ENCODE measurements at regions of chr11 and their contacts with region 1.

Region 1: GRCh38 chr11:72598906-72599305 is 75.3 kb downstream of the PDE2A start:
- DNase-seq: peak in 4 of 5 donors; percentile 51 to 72 (median 67)
- ATAC-seq: peak; percentile 73 to 87 (median 80)
- H3K4me3 ChIP-seq: no peak overlapping the region
- H3K27ac ChIP-seq: no peak overlapping the region
- H3K4me1 ChIP-seq: peaks cover 0 to 12% (median 0%) of the 10 kb centered on the region in 12 donors
- H3K27me3 ChIP-seq: peaks cover 0 to 6% (median 0%) of the 10 kb centered on the region in 9 donors
- CTCF ChIP-seq: peak; percentile 36 to 74 (median 66)
- POLR2A ChIP-seq: no peak

Region 2: DNA sequence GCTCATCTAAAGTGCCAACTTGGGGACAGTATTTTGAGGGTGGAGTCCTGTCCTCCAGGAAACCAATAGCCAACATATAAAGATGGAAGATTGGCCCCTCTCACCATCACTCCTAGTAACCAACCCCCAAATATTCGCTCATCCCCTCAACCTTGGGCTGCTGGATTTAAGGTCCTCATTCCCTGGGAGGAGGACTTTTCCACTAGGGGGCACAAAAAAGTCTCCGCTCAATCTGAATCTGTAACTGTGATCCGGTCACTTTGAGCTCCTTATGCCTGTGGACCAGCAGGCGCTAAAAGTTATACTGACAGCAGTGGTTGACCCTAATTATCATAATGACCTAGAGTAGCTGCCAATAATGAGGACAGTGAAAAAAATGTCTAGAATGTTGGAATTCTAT is 144.1 kb before region 1 on chr11:
- intact Hi-C with region 1: no loop called
- DNase-seq: no peak
- ATAC-seq: no peak
- H3K4me3 ChIP-seq: no peak overlapping the region
- H3K27ac ChIP-seq: no peak overlapping the region
- H3K4me1 ChIP-seq: no peaks in the 10 kb centered on the region
- H3K27me3 ChIP-seq: peaks cover 0 to 3% (median 0%) of the 10 kb centered on the region in 9 donors
- CTCF ChIP-seq: peak in 2 of 12 donors; percentile 4 to 8
- POLR2A ChIP-seq: no peak

Region 3: GRCh38 chr11:72541257-72541974 is 57.5 kb before region 1 on chr11:
- intact Hi-C with region 1: no loop called
- DNase-seq: peak in 1 of 5 donors; percentile 55
- ATAC-seq: peak in 3 of 4 donors; percentile 36 to 90 (median 90)
- H3K4me3 ChIP-seq: no peak overlapping the region
- H3K27ac ChIP-seq: no peak overlapping the region
- H3K4me1 ChIP-seq: no peaks in the 10 kb centered on the region
- H3K27me3 ChIP-seq: peaks cover 0 to 26% (median 0%) of the 10 kb centered on the region in 9 donors
- CTCF ChIP-seq: no peak
- POLR2A ChIP-seq: no peak

Region 4: DNA sequence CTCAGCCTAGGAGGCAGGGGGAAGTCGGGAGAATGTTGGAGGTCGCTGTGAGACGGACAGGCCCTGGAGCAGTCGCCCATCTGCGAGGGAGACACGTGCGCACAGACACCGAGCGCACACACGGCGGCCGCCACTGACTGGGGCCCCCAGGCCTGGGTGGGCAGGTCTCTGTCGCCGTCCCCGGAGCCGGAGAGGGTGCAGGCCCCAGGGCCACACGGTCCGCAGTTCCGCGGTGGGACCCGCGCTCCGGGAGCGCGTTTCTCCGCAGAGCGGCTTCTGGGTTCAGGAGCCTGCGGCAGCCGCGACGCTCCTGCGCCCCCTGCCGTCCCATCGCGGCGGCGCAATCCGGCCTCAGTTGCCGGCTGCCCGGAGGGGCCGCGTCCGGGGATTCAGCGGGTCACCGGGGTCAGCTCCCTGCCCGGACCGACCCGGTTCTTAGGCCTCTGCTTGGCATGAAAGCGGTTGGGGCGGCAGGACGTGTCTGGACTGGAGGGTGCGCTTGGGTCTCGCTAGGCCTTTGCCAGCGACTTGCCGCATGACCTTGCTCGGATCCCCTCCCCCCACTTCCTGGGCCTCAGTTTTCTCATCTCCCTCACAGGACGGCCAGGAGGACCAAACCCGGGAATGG is 44.1 kb after region 1 on chr11:
- intact Hi-C with region 1: loop called (anchors 1 to 2 kb)
- DNase-seq: peak; percentile 41 to 84 (median 62)
- ATAC-seq: peak; percentile 33 to 82 (median 72)
- H3K4me3 ChIP-seq: peak overlapping the region; percentile 54 to 88 (median 72)
- H3K27ac ChIP-seq: peak overlapping the region in 9 of 12 donors; percentile 8 to 82 (median 43)
- H3K4me1 ChIP-seq: peaks cover 2 to 43% (median 20%) of the 10 kb centered on the region in 12 donors
- H3K27me3 ChIP-seq: peaks cover 0 to 29% (median 0%) of the 10 kb centered on the region in 9 donors
- CTCF ChIP-seq: peak; percentile 95 to 100 (median 98)
- POLR2A ChIP-seq: no peak

Region 5: DNA sequence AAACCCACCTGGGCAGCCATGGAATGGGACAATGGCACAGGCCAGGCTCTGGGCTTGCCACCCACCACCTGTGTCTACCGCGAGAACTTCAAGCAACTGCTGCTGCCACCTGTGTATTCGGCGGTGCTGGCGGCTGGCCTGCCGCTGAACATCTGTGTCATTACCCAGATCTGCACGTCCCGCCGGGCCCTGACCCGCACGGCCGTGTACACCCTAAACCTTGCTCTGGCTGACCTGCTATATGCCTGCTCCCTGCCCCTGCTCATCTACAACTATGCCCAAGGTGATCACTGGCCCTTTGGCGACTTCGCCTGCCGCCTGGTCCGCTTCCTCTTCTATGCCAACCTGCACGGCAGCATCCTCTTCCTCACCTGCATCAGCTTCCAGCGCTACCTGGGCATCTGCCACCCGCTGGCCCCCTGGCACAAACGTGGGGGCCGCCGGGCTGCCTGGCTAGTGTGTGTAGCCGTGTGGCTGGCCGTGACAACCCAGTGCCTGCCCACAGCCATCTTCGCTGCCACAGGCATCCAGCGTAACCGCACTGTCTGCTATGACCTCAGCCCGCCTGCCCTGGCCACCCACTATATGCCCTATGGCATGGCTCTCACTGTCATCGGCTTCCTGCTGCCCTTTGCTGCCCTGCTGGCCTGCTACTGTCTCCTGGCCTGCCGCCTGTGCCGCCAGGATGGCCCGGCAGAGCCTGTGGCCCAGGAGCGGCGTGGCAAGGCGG is 697.8 kb after region 1 on chr11:
- intact Hi-C with region 1: no loop called
- DNase-seq: peak in 3 of 5 donors; percentile 20 to 53 (median 26)
- ATAC-seq: no peak
- H3K4me3 ChIP-seq: no peak overlapping the region
- H3K27ac ChIP-seq: no peak overlapping the region
- H3K4me1 ChIP-seq: peaks cover 0 to 19% (median 3%) of the 10 kb centered on the region in 12 donors
- H3K27me3 ChIP-seq: no peaks in the 10 kb centered on the region
- CTCF ChIP-seq: no peak
- POLR2A ChIP-seq: no peak

Measured in heart left ventricle (tissue), 16 donors.